Endothelial cell of umbilical vein (primary cell): ENCODE measurements at regions of chr15 and their contacts with region 1.

Region 1: GRCh38 chr15:43390723-43391122 is 19.8 kb downstream of the TUBGCP4 start:
- DNase-seq: no peak
- H3K4me3 ChIP-seq: no peak overlapping the region
- H3K27ac ChIP-seq: no peak overlapping the region
- H3K4me1 ChIP-seq: no peaks in the 10 kb centered on the region
- H3K27me3 ChIP-seq: no peaks in the 10 kb centered on the region
- CTCF ChIP-seq: no peak
- POLR2A ChIP-seq: no peak

Region 2: DNA sequence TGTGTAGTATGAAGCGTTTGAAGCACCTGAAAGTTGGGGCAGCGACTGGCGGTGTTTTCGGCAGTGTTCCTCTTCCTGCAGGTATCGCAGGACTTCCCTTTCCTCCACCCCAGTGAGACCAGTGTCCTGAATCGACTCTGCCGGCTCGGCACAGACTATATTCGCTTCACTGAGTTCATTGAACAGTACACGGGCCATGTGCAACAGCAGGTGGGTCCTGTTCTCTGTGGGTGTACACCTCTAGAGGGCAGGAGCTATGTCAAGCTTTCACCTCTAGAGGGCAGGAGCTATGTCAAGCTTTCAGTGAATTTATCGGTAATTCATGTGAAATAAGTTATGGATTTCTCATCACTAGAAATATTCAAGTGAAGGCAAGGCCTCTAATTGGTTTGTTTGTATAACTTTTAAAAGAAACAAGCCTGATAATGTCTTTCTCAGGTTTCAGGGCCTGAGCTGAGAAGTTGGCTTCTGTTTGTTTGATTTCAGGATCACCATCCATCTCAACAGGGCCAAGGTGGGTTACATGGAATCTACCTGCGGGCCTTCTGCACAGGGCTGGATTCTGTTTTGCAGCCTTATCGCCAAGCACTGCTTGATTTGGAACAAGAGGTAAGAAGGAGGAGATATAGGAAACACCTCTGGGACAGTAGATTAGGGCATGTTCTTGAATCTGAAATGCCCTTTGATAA is 14.6 kb before region 1 on chr15:
- CTCF ChIA-PET with region 1: interaction called, 11 read pairs
- POLR2A ChIA-PET with region 1: no interaction called
- dilution Hi-C with region 1: no loop called
- intact Hi-C with region 1: no loop called
- DNase-seq: peak; percentile 21
- H3K4me3 ChIP-seq: no peak overlapping the region
- H3K27ac ChIP-seq: no peak overlapping the region
- H3K4me1 ChIP-seq: peaks cover 9% of the 10 kb centered on the region
- H3K27me3 ChIP-seq: no peaks in the 10 kb centered on the region
- CTCF ChIP-seq: peak; percentile 68 to 81
- POLR2A ChIP-seq: no peak